Caco-2 (cell line): ENCODE measurements at regions of chr16 and their contacts with region 1.

Region 1: DNA sequence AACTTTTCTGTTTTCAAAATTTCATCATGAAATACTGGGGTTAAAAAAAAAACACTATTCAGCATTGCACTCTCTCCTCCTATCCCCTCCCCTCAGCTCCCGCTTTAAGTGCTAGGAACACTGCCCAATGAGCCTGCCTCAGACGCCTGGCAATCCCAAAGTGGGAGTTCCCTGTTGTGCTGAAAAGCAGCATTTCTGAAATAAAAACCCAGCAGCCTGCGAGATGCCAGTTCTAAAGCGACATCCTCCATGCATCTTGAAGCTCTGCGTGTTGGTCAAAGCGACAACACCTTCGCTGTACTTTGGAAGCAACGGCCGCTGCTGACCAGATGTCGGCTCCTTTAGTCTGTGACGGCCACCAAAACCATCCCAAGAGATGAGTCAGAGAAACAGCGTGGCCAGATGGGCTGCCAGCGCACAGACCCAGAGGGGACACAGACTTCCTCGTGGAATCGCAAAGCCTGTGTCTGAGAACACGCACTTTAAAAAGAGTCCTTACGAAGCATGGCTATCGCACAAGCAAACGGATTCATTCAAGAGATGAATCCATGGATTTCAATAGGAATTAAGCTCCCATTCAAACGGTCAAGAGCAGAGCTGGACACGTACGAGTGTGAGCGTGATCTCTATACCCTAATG is 32.8 kb downstream of the FBXO31 start:
- DNase-seq: no peak
- H3K4me3 ChIP-seq: no peak overlapping the region
- H3K4me3 Mint-ChIP-seq: no peak overlapping the region
- H3K27ac Mint-ChIP-seq: no peak overlapping the region
- H3K4me1 ChIP-seq: peaks cover 11% of the 10 kb centered on the region
- H3K4me1 Mint-ChIP-seq: peaks cover 6% of the 10 kb centered on the region
- H3K27me3 ChIP-seq: no peaks in the 10 kb centered on the region
- H3K27me3 Mint-ChIP-seq: no peaks in the 10 kb centered on the region
- CTCF ChIP-seq: no peak

Region 2: GRCh38 chr16:87316923-87317749 is 33.7 kb before region 1 on chr16 and contains the start of gene C16orf95:
- CTCF ChIA-PET with region 1: no interaction called
- POLR2A ChIA-PET with region 1: interaction called, 12 read pairs
- intact Hi-C with region 1: no loop called
- DNase-seq: peak; percentile 98 to 99
- H3K4me3 ChIP-seq: peak within 1 kb of the TSS; percentile 90
- H3K4me3 Mint-ChIP-seq: peak within 1 kb of the TSS; percentile 97
- H3K27ac Mint-ChIP-seq: peak within 1 kb of the TSS; percentile 99
- H3K4me1 ChIP-seq: peaks cover 6% of the 10 kb centered on the region
- H3K4me1 Mint-ChIP-seq: peaks cover 7% of the 10 kb centered on the region
- H3K27me3 ChIP-seq: no peaks in the 10 kb centered on the region
- H3K27me3 Mint-ChIP-seq: no peaks in the 10 kb centered on the region
- CTCF ChIP-seq: peak; percentile 53 to 69
- total RNA-seq, gene C16orf95: 4.4 and 6.9 TPM in 2 replicates

Region 3: GRCh38 chr16:87375426-87376135 is 24.8 kb after region 1 on chr16:
- CTCF ChIA-PET with region 1: no interaction called
- POLR2A ChIA-PET with region 1: no interaction called
- intact Hi-C with region 1: no loop called
- DNase-seq: no peak
- H3K4me3 ChIP-seq: no peak overlapping the region
- H3K4me3 Mint-ChIP-seq: no peak overlapping the region
- H3K27ac Mint-ChIP-seq: no peak overlapping the region
- H3K4me1 ChIP-seq: peaks cover 24% of the 10 kb centered on the region
- H3K4me1 Mint-ChIP-seq: peaks cover 14% of the 10 kb centered on the region
- H3K27me3 ChIP-seq: no peaks in the 10 kb centered on the region
- H3K27me3 Mint-ChIP-seq: no peaks in the 10 kb centered on the region
- CTCF ChIP-seq: no peak

Region 4: GRCh38 chr16:87636072-87636684 is 285.4 kb after region 1 on chr16:
- CTCF ChIA-PET with region 1: no interaction called
- POLR2A ChIA-PET with region 1: no interaction called
- intact Hi-C with region 1: no loop called
- DNase-seq: peak; percentile 87 to 90
- H3K4me3 ChIP-seq: peak overlapping the region; percentile 28
- H3K4me3 Mint-ChIP-seq: peak overlapping the region; percentile 66
- H3K27ac Mint-ChIP-seq: no peak overlapping the region
- H3K4me1 ChIP-seq: peaks cover 7% of the 10 kb centered on the region; the same call in 1 of the 2 replicates
- H3K4me1 Mint-ChIP-seq: peaks cover 9% of the 10 kb centered on the region
- H3K27me3 ChIP-seq: no peaks in the 10 kb centered on the region
- H3K27me3 Mint-ChIP-seq: peaks cover 27% of the 10 kb centered on the region
- CTCF ChIP-seq: peak; percentile 91 to 93